Activated CD8-positive, alpha-beta T cell treated with anti-CD3 and anti-CD28 coated beads, Interleukin-2, amount 10 ng/mL, durations not matched to agents 7 days and 5 days (primary cell): ENCODE measurements at regions of chr4 and their contacts with region 1.

Region 1: GRCh38 chr4:153466081-153466948 is at the start of gene TMEM131L:
- DNase-seq: peak; percentile 71
- ATAC-seq: peak; percentile 77
- H3K4me3 Mint-ChIP-seq: peak within 1 kb of the TSS; percentile 96
- H3K27ac Mint-ChIP-seq: peak within 1 kb of the TSS; percentile 95
- H3K4me1 Mint-ChIP-seq: peaks cover 39% of the 10 kb centered on the region
- H3K27me3 Mint-ChIP-seq: no peaks in the 10 kb centered on the region
- total RNA-seq, gene TMEM131L: 54.9 to 58.4 TPM

Region 2: GRCh38 chr4:153344131-153345010 is 121.9 kb before region 1 on chr4 and contains the start of gene MND1:
- CTCF ChIA-PET with region 1: interaction called, 35 read pairs
- POLR2A ChIA-PET with region 1: interaction called, 6 read pairs
- DNase-seq: peak; percentile 94
- ATAC-seq: peak; percentile 94
- H3K4me3 Mint-ChIP-seq: peak within 1 kb of the TSS; percentile 97
- H3K27ac Mint-ChIP-seq: peak within 1 kb of the TSS; percentile 94
- H3K4me1 Mint-ChIP-seq: peaks cover 47% of the 10 kb centered on the region
- H3K27me3 Mint-ChIP-seq: peaks cover 14% of the 10 kb centered on the region
- total RNA-seq, gene MND1: 37.4 to 38.3 TPM

Region 3: GRCh38 chr4:153438916-153439756 is 27.2 kb before region 1 on chr4:
- CTCF ChIA-PET with region 1: interaction called, 38 read pairs
- POLR2A ChIA-PET with region 1: interaction called, 46 read pairs
- DNase-seq: peak; percentile 56
- ATAC-seq: peak; percentile 89
- H3K4me3 Mint-ChIP-seq: peak overlapping the region; percentile 80
- H3K27ac Mint-ChIP-seq: peak overlapping the region; percentile 88
- H3K4me1 Mint-ChIP-seq: peaks cover 59% of the 10 kb centered on the region
- H3K27me3 Mint-ChIP-seq: no peaks in the 10 kb centered on the region

Region 4: DNA sequence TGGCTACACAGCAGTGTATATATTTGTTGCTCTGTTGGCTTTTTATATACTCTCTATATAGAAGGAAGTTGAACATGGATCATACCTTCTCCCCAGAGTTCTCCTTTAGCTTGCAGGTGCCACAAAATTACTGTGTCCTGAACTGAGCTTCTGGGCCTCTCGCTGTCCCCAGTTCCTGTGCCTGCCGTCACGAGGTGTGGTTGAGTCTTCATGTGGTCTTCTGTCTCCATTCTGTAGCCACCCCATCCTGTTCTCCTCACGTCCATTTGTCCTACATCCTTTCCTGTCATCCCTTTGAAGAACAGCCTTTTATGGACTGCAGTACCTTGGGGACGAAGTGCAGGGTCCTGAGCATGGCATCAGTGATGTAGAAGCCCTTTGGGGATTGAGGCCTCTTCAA is 14.4 kb after region 1 on chr4:
- CTCF ChIA-PET with region 1: interaction called, 52 read pairs
- POLR2A ChIA-PET with region 1: interaction called, 38 read pairs
- DNase-seq: no peak
- ATAC-seq: peak; percentile 66
- H3K4me3 Mint-ChIP-seq: no peak overlapping the region
- H3K27ac Mint-ChIP-seq: peak overlapping the region; percentile 73
- H3K4me1 Mint-ChIP-seq: peaks cover 62% of the 10 kb centered on the region
- H3K27me3 Mint-ChIP-seq: no peaks in the 10 kb centered on the region

Region 5: GRCh38 chr4:153521999-153522801 is 55.9 kb after region 1 on chr4:
- CTCF ChIA-PET with region 1: interaction called, 27 read pairs
- POLR2A ChIA-PET with region 1: interaction called, 22 read pairs
- DNase-seq: peak; percentile 89
- ATAC-seq: peak; percentile 80
- H3K4me3 Mint-ChIP-seq: peak overlapping the region; percentile 70
- H3K27ac Mint-ChIP-seq: peak overlapping the region; percentile 96
- H3K4me1 Mint-ChIP-seq: peaks cover 95% of the 10 kb centered on the region
- H3K27me3 Mint-ChIP-seq: no peaks in the 10 kb centered on the region

Region 6: DNA sequence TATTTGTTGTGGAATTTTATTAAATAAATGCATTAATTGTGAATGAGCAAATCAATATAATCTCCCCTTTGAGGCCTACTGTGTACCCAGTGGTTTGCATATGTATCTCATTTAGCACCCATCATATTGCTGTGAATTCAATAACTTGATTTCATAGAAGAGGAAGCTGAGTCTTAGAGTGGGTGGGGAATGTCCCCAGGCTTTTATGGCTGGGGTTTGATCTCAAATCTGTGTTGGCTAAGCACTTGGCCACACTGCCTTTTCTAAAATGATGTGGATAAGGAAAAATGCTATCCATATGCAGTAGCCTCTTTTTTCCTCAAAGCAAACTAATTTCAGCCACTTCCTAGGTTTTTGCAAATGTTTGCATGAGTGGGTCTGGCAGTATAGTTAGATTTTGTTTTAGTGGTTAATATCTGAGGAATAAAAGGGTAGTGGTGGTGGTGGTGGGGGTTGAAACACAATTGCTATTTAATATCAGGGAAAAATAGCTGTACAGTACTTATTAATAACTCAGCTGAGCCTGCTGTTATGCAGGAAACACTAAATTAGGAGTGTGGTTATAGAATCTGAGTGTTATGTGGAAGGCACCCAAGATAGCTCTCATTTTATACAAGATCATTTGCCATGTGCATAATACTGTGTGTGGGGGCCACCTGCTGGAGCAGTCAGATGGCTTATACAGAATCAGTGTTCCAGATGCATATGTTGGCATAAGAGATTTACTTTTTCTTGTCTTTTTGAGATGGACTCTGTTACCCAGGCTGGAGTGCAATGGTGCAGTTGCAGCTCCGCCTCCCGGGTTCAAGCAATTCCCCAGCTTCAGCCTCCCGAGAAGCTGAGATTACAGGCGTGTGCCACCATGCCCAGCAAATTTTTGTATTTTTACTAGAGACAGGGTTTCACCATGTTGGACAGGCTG is 107.8 kb after region 1 on chr4:
- CTCF ChIA-PET with region 1: interaction called, 83 read pairs
- POLR2A ChIA-PET with region 1: interaction called, 11 read pairs
- DNase-seq: peak; percentile 83
- ATAC-seq: peak; percentile 93
- H3K4me3 Mint-ChIP-seq: no peak overlapping the region
- H3K27ac Mint-ChIP-seq: peak overlapping the region; percentile 75
- H3K4me1 Mint-ChIP-seq: peaks cover 64% of the 10 kb centered on the region
- H3K27me3 Mint-ChIP-seq: no peaks in the 10 kb centered on the region